Transverse colon (tissue), 4 donors: ENCODE measurements at regions of chr1 and their contacts with region 1.

Region 1: DNA sequence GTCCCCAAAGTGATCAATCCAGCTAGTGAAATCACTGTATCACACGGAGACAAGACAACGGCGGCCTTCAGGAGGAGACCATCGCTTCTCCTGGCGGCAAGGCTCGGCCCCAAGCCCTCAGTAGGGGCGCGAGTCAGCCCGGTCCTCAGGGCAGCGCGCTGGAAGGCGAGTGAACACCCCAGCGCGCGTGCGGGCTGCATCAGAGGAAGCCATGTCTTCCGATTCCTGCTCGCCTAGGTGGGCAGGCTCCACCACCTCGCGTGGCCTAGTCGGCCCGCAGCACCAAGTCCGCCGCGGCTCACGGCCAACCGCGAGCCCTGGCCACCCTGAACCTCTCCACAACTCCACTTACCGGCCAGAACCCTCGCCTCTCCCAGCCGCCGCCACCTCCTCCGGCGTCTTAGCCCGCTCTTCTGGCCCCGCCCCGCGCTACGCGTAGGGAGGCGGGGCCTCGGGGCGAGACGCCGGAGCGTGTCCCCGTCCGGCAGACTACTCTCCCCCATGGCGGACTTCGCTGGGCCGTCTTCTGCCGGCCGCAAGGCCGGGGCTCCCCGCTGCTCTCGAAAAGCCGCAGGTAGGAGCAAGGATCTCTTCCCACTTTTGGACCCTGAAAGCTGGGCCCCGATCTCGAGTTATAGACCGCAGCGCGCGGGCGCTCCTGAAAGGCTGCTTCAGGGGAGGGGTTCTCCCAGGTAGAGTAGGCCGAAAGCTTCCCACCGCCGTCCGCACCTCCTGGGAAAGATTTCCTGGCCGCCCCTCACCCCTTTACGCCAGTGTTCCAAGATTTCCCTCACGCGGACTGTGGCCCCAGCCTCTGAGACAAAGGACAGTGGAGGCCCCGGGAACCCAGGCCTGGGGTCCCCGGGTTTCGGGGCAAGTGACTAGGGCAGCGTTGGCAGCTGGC is at the starts of genes GLMN and RPAP2:
- DNase-seq: peak; percentile 84
- H3K4me3 ChIP-seq: peak within 1 kb of the TSS; percentile 48 to 95 (median 86)
- H3K27ac ChIP-seq: peak within 1 kb of the TSS; percentile 93 to 95 (median 94)
- H3K4me1 ChIP-seq: peaks cover 3 to 22% (median 18%) of the 10 kb centered on the region in 4 donors
- H3K27me3 ChIP-seq: no peaks in the 10 kb centered on the region
- CTCF ChIP-seq: no peak
- EP300 ChIP-seq: no peak
- POLR2A ChIP-seq: peak; percentile 79
- total RNA-seq, gene GLMN: 2.4 to 8.7 (median 4.1) TPM
- total RNA-seq, gene RPAP2: 3.2 to 37.8 (median 11.7) TPM

Region 2: GRCh38 chr1:91500756-91501522 is 797.9 kb before region 1 on chr1 and contains the start of gene CDC7:
- in situ Hi-C with region 1: loop called in 1 of 4 experiments (anchors 25 kb)
- intact Hi-C with region 1: no loop called
- DNase-seq: peak; percentile 91
- H3K4me3 ChIP-seq: peak within 1 kb of the TSS; percentile 60 to 77 (median 68)
- H3K27ac ChIP-seq: peak within 1 kb of the TSS; percentile 80 to 92 (median 88)
- H3K4me1 ChIP-seq: peaks cover 3 to 21% (median 14%) of the 10 kb centered on the region in 4 donors
- H3K27me3 ChIP-seq: no peaks in the 10 kb centered on the region
- CTCF ChIP-seq: peak in 4 of 5 experiments; percentile 24 to 48 (median 25)
- EP300 ChIP-seq: no peak
- POLR2A ChIP-seq: no peak
- total RNA-seq, gene CDC7: 0.68 to 2.8 (median 1.3) TPM in 3 of 4 donors, not detected in the other

Region 3: DNA sequence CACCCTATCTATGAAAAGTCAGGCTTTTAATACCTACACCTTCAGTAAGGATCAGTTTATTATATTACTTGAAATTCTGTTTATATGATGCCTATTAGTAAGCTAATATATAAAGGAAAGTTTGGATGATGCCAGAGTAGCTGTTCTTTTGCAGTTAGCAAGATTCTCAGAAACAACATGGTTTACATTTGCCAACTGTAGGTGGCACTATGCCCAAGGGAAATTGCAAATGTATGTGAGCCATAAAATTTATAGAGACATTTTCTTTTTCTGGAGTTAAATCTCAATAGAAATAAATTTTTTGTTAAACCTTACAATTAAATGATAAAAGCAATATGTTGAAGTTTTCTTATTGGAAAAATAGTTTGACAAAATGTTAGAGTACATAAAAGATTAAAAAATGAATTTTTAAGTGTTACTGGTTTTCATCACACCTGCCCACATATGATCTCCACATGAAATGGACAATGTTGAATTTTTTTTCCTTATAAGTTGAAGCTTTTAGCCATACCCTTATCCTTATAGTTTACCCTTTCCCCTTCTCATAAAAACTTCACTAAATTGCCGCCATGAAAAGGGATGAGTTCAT is 301.1 kb before region 1 on chr1:
- in situ Hi-C with region 1: loop called in 2 of 4 experiments (anchors 25 kb)
- intact Hi-C with region 1: no loop called
- DNase-seq: peak; percentile 21
- H3K4me3 ChIP-seq: no peak overlapping the region
- H3K27ac ChIP-seq: no peak overlapping the region
- H3K4me1 ChIP-seq: no peaks in the 10 kb centered on the region
- H3K27me3 ChIP-seq: no peaks in the 10 kb centered on the region
- CTCF ChIP-seq: peak; percentile 44 to 54 (median 50)
- EP300 ChIP-seq: no peak
- POLR2A ChIP-seq: no peak

Region 4: DNA sequence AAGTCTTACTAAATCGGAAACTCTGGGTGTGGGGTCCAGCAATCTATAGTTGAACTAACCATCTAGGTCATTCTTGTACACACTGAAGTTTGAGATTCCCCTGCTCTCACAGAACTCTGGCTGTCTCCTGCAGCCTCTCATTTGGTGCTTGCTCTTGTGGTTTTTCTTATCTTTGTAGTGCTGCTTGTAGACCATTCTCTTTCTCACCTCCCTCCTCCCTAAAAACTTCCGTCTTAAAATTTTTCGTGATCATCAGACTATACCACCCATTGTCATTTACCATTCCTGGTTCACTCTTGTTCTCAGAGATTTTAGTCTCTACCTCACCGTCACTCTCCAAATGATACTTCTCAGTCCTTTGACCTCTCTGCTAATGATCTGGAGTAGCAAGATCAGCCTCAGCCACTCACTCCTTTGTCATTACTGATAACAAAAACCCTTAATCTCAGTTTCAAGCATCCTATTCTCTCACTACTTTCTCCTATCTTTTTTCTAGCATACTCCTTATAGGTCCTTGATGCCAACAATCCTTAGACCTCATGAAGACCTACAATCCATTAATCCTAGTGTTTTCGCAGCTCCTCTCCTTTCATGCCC is 282.0 kb before region 1 on chr1:
- in situ Hi-C with region 1: loop called in 1 of 4 experiments (anchors 25 kb)
- intact Hi-C with region 1: no loop called
- DNase-seq: no peak
- H3K4me3 ChIP-seq: no peak overlapping the region
- H3K27ac ChIP-seq: no peak overlapping the region
- H3K4me1 ChIP-seq: no peaks in the 10 kb centered on the region
- H3K27me3 ChIP-seq: peaks cover 4% of the 10 kb centered on the region
- CTCF ChIP-seq: no peak
- EP300 ChIP-seq: no peak
- POLR2A ChIP-seq: no peak